Breast epithelium (tissue), 4 donors: ENCODE measurements at regions of chr1 and their contacts with region 1.

Region 1: GRCh38 chr1:156813750-156814570 is 2.7 kb downstream of the SH2D2A start:
- DNase-seq: peak; percentile 40 to 61
- H3K4me3 ChIP-seq: peak overlapping the region; percentile 28 to 61 (median 58)
- H3K27ac ChIP-seq: peak overlapping the region in 1 of 2 donors; percentile 88
- H3K4me1 ChIP-seq: no peaks in the 10 kb centered on the region
- H3K27me3 ChIP-seq: no peaks in the 10 kb centered on the region
- CTCF ChIP-seq: peak; percentile 14 to 55 (median 50)
- POLR2A ChIP-seq: no peak

Region 2: GRCh38 chr1:156062189-156062588 is 751.8 kb before region 1 on chr1:
- intact Hi-C with region 1: no loop called
- DNase-seq: no peak
- H3K4me3 ChIP-seq: peak overlapping the region in 2 of 3 donors; percentile 51 to 64
- H3K27ac ChIP-seq: peak overlapping the region; percentile 25 to 84
- H3K4me1 ChIP-seq: no peaks in the 10 kb centered on the region
- H3K27me3 ChIP-seq: no peaks in the 10 kb centered on the region
- CTCF ChIP-seq: no peak
- POLR2A ChIP-seq: no peak

Region 3: GRCh38 chr1:156746728-156747631 is 67.0 kb before region 1 on chr1:
- intact Hi-C with region 1: loop called (anchors 2 kb)
- DNase-seq: peak; percentile 96 to 97
- H3K4me3 ChIP-seq: peak overlapping the region; percentile 87 to 98 (median 95)
- H3K27ac ChIP-seq: peak overlapping the region; percentile 100
- H3K4me1 ChIP-seq: peaks cover 8 to 30% of the 10 kb centered on the region in 2 donors
- H3K27me3 ChIP-seq: no peaks in the 10 kb centered on the region
- CTCF ChIP-seq: no peak
- POLR2A ChIP-seq: peak; percentile 49